Naive thymus-derived CD4-positive, alpha-beta T cell (primary cell): ENCODE measurements at regions of chr22 and their contacts with region 1.

Region 1: DNA sequence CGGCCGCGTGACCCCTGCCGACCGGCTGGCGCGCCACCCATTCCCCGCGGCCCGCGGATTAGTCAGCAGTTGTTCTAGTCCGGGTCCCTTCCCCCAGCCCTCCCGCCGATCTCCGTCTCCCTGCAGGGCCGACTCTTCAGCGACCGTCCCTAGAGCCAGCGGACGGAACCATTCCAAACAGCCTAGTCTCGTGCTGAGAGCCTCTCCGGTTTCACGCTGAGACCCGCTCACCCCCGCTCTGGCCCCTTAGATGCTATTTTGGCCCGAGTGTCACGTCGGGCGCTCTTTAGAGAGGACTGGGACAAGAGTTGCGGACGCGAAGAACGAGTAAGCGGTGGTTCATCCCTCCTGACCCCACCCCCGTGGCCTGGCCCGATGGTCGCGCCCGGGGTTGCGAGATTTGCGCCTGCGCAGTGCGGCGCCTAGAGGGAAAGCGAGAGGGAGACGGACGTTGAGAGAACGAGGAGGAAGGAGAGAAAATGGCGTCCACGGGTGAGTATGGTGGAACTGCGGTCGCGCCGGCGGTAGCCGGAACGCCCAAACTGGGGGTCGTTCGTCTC is at the starts of genes EWSR1 and RHBDD3:
- DNase-seq: peak; percentile 90 to 100 (median 97)
- ATAC-seq: peak; percentile 94
- H3K4me3 ChIP-seq: peak within 1 kb of the TSS; percentile 96
- H3K4me3 Mint-ChIP-seq: peak within 1 kb of the TSS; percentile 93 to 100 (median 96)
- H3K27ac ChIP-seq: peak within 1 kb of the TSS; percentile 98
- H3K27ac Mint-ChIP-seq: peak within 1 kb of the TSS; percentile 97 to 100 (median 99)
- H3K4me1 ChIP-seq: peaks cover 39 to 41% of the 10 kb centered on the region in 2 donors
- H3K4me1 Mint-ChIP-seq: peaks cover 44 to 59% (median 54%) of the 10 kb centered on the region in 7 donors
- H3K27me3 ChIP-seq: no peaks in the 10 kb centered on the region
- H3K27me3 Mint-ChIP-seq: peaks cover 0 to 5% (median 0%) of the 10 kb centered on the region in 5 donors
- total RNA-seq, gene EWSR1: 249 to 366 (median 273) TPM
- total RNA-seq, gene RHBDD3: 10.8 to 39.4 (median 14.7) TPM

Region 2: DNA sequence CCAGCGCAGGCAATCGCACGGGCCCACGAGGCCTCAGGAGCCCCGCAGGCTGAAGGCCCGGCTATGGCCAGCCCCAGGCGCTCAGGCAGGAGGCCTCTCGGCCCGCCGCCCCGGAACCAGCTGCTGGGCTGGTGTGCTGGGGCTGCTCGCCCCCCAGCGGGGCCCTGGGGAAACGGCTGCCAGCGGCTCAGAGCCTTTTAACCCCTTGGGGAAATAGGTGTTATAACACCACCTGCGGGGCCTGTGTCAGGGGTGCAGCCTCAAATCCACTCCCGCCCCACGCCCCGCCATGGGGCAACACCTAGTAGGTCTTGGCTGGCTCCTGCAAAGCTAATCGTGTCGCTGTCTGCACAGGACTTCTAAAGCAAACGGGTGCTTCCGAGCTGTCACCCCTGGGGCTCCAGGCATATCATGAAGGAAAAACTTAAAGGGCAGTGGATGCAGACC is 825.7 kb before region 1 on chr22:
- CTCF ChIA-PET with region 1: no interaction called
- POLR2A ChIA-PET with region 1: interaction called, 4 read pairs
- intact Hi-C with region 1: loop called in 1 of 2 experiments (anchors 2 kb)
- DNase-seq: peak; percentile 54 to 79 (median 77)
- ATAC-seq: peak; percentile 91
- H3K4me3 ChIP-seq: peak overlapping the region; percentile 72
- H3K4me3 Mint-ChIP-seq: peak overlapping the region; percentile 88 to 97 (median 94)
- H3K27ac ChIP-seq: peak overlapping the region; percentile 58
- H3K27ac Mint-ChIP-seq: peak overlapping the region; percentile 66 to 90 (median 84)
- H3K4me1 ChIP-seq: peaks cover 0 to 15% of the 10 kb centered on the region in 2 donors
- H3K4me1 Mint-ChIP-seq: peaks cover 10 to 27% (median 24%) of the 10 kb centered on the region in 7 donors
- H3K27me3 ChIP-seq: peaks cover 0 to 4% of the 10 kb centered on the region in 2 donors
- H3K27me3 Mint-ChIP-seq: peaks cover 0 to 26% (median 0%) of the 10 kb centered on the region in 5 donors

Region 3: GRCh38 chr22:28772633-28773460 is 495.1 kb before region 1 on chr22 and contains the start of gene CCDC117:
- CTCF ChIA-PET with region 1: no interaction called
- POLR2A ChIA-PET with region 1: no interaction called
- intact Hi-C with region 1: loop called (anchors 1 to 2 kb)
- DNase-seq: peak; percentile 76 to 93 (median 88)
- ATAC-seq: peak; percentile 97
- H3K4me3 ChIP-seq: peak within 1 kb of the TSS; percentile 83
- H3K4me3 Mint-ChIP-seq: peak within 1 kb of the TSS; percentile 84 to 100 (median 97)
- H3K27ac ChIP-seq: peak within 1 kb of the TSS; percentile 91
- H3K27ac Mint-ChIP-seq: peak within 1 kb of the TSS; percentile 86 to 98 (median 91)
- H3K4me1 ChIP-seq: peaks cover 13 to 17% of the 10 kb centered on the region in 2 donors
- H3K4me1 Mint-ChIP-seq: peaks cover 17 to 46% (median 31%) of the 10 kb centered on the region in 7 donors
- H3K27me3 ChIP-seq: no peaks in the 10 kb centered on the region
- H3K27me3 Mint-ChIP-seq: peaks cover 0 to 2% (median 0%) of the 10 kb centered on the region in 5 donors
- total RNA-seq, gene CCDC117: 13.5 to 33.5 (median 21.2) TPM

Region 4: DNA sequence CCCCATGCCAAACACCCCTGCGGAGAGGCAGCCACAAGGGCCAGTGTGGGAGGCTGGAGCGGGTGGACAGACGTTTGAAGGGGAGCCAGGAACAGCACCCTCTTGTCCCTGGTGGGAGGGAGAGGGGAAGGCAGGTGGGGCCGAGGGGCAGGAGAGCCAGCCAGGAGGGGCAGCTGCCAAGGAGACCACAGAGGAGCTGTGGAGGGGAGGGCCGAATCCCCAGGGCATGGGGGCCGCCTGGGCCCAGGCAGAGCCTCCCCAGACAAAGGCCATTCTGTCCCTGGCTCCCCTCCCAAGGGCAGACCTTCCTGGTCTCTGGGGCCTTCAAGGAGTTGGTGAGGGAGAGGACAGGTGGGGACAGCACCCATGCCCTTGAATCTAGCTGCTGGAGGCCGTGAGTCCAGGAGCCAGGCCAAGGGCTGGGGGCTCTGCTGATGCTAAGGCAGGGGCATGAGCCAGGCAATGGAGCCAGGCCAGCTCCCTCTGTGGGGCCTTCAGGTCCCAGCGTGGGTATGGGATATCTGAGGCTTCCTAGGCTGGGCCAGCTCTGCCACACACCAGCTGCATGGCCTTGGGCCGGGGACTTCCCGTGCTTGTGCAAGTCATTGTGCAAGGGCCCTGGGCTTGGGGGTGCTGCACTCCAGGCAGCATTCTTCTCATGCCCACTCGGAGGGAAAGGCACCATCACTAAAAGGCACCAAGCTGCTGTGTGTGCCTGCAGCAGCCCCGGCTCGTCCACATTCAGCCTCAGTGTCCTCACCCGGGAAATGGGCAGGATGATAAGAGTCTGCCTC is 50.9 kb before region 1 on chr22:
- CTCF ChIA-PET with region 1: no interaction called
- POLR2A ChIA-PET with region 1: no interaction called
- intact Hi-C with region 1: no loop called
- DNase-seq: no peak
- ATAC-seq: peak; percentile 58
- H3K4me3 ChIP-seq: no peak overlapping the region
- H3K4me3 Mint-ChIP-seq: no peak overlapping the region
- H3K27ac ChIP-seq: no peak overlapping the region
- H3K27ac Mint-ChIP-seq: no peak overlapping the region
- H3K4me1 ChIP-seq: no peaks in the 10 kb centered on the region
- H3K4me1 Mint-ChIP-seq: no peaks in the 10 kb centered on the region
- H3K27me3 ChIP-seq: no peaks in the 10 kb centered on the region
- H3K27me3 Mint-ChIP-seq: no peaks in the 10 kb centered on the region

Region 5: GRCh38 chr22:29306175-29306834 is 38.4 kb after region 1 on chr22 and contains the start of gene GAS2L1:
- CTCF ChIA-PET with region 1: no interaction called
- POLR2A ChIA-PET with region 1: interaction called, 3 read pairs
- intact Hi-C with region 1: loop called (anchors 2 to 5 kb)
- DNase-seq: peak in 3 of 9 donors; percentile 24 to 69 (median 45)
- ATAC-seq: peak; percentile 48
- H3K4me3 ChIP-seq: peak within 1 kb of the TSS; percentile 55
- H3K4me3 Mint-ChIP-seq: peak within 1 kb of the TSS; percentile 75 to 93 (median 85)
- H3K27ac ChIP-seq: no peak within 1 kb of the TSS
- H3K27ac Mint-ChIP-seq: peak within 1 kb of the TSS in 3 of 9 donors; percentile 21 to 67 (median 46)
- H3K4me1 ChIP-seq: peaks cover 3 to 10% of the 10 kb centered on the region in 2 donors
- H3K4me1 Mint-ChIP-seq: peaks cover 7 to 24% (median 12%) of the 10 kb centered on the region in 7 donors
- H3K27me3 ChIP-seq: peaks cover 0 to 12% of the 10 kb centered on the region in 2 donors
- H3K27me3 Mint-ChIP-seq: peaks cover 5 to 21% (median 14%) of the 10 kb centered on the region in 5 donors
- total RNA-seq, gene GAS2L1: 0.37 to 7.5 (median 2.0) TPM in 4 of 5 experiments, not detected in the other

Region 6: GRCh38 chr22:29408945-29409344 is 141.0 kb after region 1 on chr22:
- CTCF ChIA-PET with region 1: no interaction called
- POLR2A ChIA-PET with region 1: no interaction called
- intact Hi-C with region 1: loop called in 1 of 2 experiments (anchors 10 kb)
- DNase-seq: no peak
- ATAC-seq: no peak
- H3K4me3 ChIP-seq: no peak overlapping the region
- H3K4me3 Mint-ChIP-seq: no peak overlapping the region
- H3K27ac ChIP-seq: no peak overlapping the region
- H3K27ac Mint-ChIP-seq: no peak overlapping the region
- H3K4me1 ChIP-seq: no peaks in the 10 kb centered on the region
- H3K4me1 Mint-ChIP-seq: peaks cover under 1 to 29% (median 6%) of the 10 kb centered on the region in 7 donors
- H3K27me3 ChIP-seq: no peaks in the 10 kb centered on the region
- H3K27me3 Mint-ChIP-seq: peaks cover 0 to 6% (median 0%) of the 10 kb centered on the region in 5 donors

Region 7: DNA sequence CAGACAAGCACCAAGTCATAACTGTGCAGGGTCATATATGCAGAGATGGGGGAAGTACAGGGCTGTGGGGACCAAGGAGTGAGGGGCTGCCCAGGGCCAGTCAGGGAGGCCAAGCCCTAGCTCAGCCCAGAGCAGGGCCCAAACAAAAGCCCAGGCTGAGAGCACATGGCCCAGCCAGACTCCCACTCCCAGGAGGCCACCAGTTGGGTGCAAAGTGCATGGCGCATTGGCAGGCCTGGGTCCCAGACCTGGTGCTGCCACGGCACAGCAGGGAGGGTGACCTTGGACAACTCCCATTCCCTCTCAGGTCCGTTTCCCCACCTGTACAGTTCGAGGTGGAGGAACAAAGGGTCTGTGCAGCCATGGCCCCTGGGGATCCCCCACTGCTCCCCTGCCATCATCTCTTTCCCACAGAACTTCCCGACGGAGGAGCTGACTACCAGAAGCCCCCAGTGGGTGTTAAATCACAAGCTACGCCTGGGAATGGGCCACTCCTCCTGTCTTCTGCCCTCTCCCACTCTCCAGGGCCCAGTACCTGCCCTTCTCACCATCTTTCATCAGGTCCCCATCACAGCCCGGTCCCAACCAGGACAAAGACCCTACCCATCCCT is 312.4 kb after region 1 on chr22:
- CTCF ChIA-PET with region 1: no interaction called
- POLR2A ChIA-PET with region 1: no interaction called
- intact Hi-C with region 1: loop called in 1 of 2 experiments (anchors 10 kb)
- DNase-seq: peak in 1 of 9 donors; percentile 26
- ATAC-seq: no peak
- H3K4me3 ChIP-seq: peak overlapping the region; percentile 75
- H3K4me3 Mint-ChIP-seq: peak overlapping the region; percentile 88 to 96 (median 93)
- H3K27ac ChIP-seq: peak overlapping the region; percentile 69
- H3K27ac Mint-ChIP-seq: peak overlapping the region; percentile 78 to 95 (median 91)
- H3K4me1 ChIP-seq: peaks cover 0 to 10% of the 10 kb centered on the region in 2 donors
- H3K4me1 Mint-ChIP-seq: peaks cover 11 to 20% (median 16%) of the 10 kb centered on the region in 7 donors
- H3K27me3 ChIP-seq: no peaks in the 10 kb centered on the region
- H3K27me3 Mint-ChIP-seq: no peaks in the 10 kb centered on the region

Region 8: GRCh38 chr22:29883045-29883774 is 615.3 kb after region 1 on chr22 and contains the start of gene MTMR3:
- CTCF ChIA-PET with region 1: no interaction called
- POLR2A ChIA-PET with region 1: no interaction called
- intact Hi-C with region 1: loop called in 1 of 2 experiments (anchors 10 kb)
- DNase-seq: peak; percentile 71 to 99 (median 82)
- ATAC-seq: peak; percentile 91
- H3K4me3 ChIP-seq: peak within 1 kb of the TSS; percentile 69
- H3K4me3 Mint-ChIP-seq: peak within 1 kb of the TSS in 7 of 10 donors; percentile 72 to 95 (median 92)
- H3K27ac ChIP-seq: peak within 1 kb of the TSS; percentile 93
- H3K27ac Mint-ChIP-seq: peak within 1 kb of the TSS; percentile 70 to 93 (median 84)
- H3K4me1 ChIP-seq: peaks cover 17 to 21% of the 10 kb centered on the region in 2 donors
- H3K4me1 Mint-ChIP-seq: peaks cover 0 to 12% (median 1%) of the 10 kb centered on the region in 7 donors
- H3K27me3 ChIP-seq: no peaks in the 10 kb centered on the region
- H3K27me3 Mint-ChIP-seq: peaks cover 0 to 3% (median 0%) of the 10 kb centered on the region in 5 donors
- total RNA-seq, gene MTMR3: 33.2 to 88.7 (median 64.6) TPM